Left lung (tissue), 14 donors: ENCODE measurements at regions of chr10 and their contacts with region 1.

Region 1: GRCh38 chr10:70354556-70354955 is 27.9 kb downstream of the LRRC20 start:
- DNase-seq: no peak
- ATAC-seq: no peak
- H3K4me3 ChIP-seq: no peak overlapping the region
- H3K27ac ChIP-seq: peak overlapping the region; percentile 50 to 57
- H3K4me1 ChIP-seq: peaks cover 15 to 62% of the 10 kb centered on the region in 2 donors
- H3K27me3 ChIP-seq: no peaks in the 10 kb centered on the region
- CTCF ChIP-seq: no peak

Region 2: GRCh38 chr10:70221030-70221429 is 133.5 kb before region 1 on chr10:
- intact Hi-C with region 1: loop called in 1 of 2 experiments (anchors 5 kb)
- DNase-seq: no peak
- ATAC-seq: no peak
- H3K4me3 ChIP-seq: no peak overlapping the region
- H3K27ac ChIP-seq: peak overlapping the region; percentile 18 to 51
- H3K4me1 ChIP-seq: peaks cover 5 to 12% of the 10 kb centered on the region in 2 donors
- H3K27me3 ChIP-seq: no peaks in the 10 kb centered on the region
- CTCF ChIP-seq: no peak